Activated CD8-positive, alpha-beta T cell treated with anti-CD3 and anti-CD28 coated beads for 36 hours (primary cell): ENCODE measurements at regions of chr16 and their contacts with region 1.

Region 1: GRCh38 chr16:66872943-66873684 is 7.2 kb upstream of the PDP2 start:
- DNase-seq: peak; percentile 97
- ATAC-seq: peak; percentile 84
- H3K4me3 Mint-ChIP-seq: peak overlapping the region; percentile 83
- H3K27ac Mint-ChIP-seq: peak overlapping the region; percentile 93
- H3K4me1 Mint-ChIP-seq: peaks cover 48% of the 10 kb centered on the region
- H3K27me3 Mint-ChIP-seq: no peaks in the 10 kb centered on the region
- CTCF ChIP-seq: peak; percentile 94

Region 2: DNA sequence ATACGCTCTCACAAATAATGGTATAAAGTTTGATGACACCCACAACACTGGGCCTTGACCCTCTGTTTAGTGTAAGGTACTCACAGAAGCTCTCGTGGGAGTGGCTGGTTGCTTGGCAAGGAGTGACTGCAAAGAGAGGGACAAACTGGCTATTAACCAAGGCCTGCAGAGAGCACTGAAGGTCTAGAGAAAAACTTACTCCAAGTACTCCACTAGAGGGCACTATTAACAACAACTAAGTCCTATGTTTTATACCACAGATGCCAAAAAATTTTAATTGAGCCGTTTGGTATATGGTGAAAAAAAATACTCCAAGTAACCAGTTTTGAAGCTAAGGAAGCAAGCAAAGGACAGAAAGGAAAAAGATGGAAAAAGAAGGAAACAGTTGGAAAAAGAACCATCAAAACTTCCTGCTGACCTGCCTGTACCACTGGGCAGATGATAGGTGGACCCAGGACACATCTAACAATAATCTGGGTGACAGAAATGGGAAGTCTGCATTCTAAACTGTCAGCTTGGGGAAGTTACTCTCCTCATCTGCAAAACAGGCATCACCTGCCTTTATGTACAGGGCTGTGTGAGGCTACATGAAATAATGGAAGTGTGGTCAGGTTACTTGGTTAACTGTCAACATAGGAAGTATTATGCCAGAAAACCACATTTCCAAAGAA is 144.9 kb before region 1 on chr16:
- CTCF ChIA-PET with region 1: interaction called, 31 read pairs
- POLR2A ChIA-PET with region 1: no interaction called
- intact Hi-C with region 1: no loop called
- DNase-seq: no peak
- ATAC-seq: peak; percentile 80
- H3K4me3 Mint-ChIP-seq: no peak overlapping the region
- H3K27ac Mint-ChIP-seq: peak overlapping the region; percentile 65
- H3K4me1 Mint-ChIP-seq: peaks cover 4% of the 10 kb centered on the region
- H3K27me3 Mint-ChIP-seq: no peaks in the 10 kb centered on the region
- CTCF ChIP-seq: peak; percentile 72

Region 3: DNA sequence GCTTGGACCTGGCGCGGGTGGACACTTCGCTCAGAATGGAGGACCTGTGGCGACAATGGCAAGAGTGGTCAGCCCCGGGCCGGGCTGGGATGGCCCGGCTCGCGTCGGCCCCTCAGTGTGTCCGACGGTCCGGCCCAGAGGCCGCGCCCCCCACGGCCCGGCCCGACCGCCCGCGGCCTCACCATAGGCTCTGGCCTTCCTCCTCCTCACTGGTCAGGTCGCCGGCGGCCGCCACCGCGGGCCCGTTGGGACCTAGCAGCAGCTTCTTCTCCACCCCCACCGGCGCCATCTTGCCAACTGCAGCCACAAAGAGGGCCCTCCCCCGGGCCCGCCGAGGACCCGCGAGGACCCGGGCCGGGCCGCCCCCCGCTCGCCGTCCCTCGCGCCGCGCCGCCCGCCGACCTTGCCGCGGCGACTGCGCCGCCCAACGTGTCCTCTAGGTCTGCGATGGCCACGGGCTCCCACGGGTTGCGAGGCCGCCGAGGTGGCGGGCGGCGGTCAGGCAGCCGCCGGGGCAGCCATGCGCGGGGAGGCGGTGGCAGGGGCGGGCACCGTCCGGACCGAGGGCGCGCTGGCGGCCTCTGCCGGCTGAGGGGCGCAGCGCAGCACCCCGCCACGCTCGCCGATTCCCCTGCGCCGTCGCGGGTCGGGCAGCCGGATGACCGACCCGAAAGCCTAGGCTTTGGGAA is 121.7 kb before region 1 on chr16 and contains the start of gene DYNC1LI2:
- CTCF ChIA-PET with region 1: interaction called, 14 read pairs
- POLR2A ChIA-PET with region 1: no interaction called
- intact Hi-C with region 1: no loop called
- DNase-seq: peak; percentile 85
- ATAC-seq: peak; percentile 97
- H3K4me3 Mint-ChIP-seq: peak within 1 kb of the TSS; percentile 82
- H3K27ac Mint-ChIP-seq: peak within 1 kb of the TSS; percentile 88
- H3K4me1 Mint-ChIP-seq: peaks cover 42% of the 10 kb centered on the region
- H3K27me3 Mint-ChIP-seq: peaks cover 5% of the 10 kb centered on the region
- CTCF ChIP-seq: peak; percentile 88
- total RNA-seq, gene DYNC1LI2: 35.0 to 39.5 TPM

Region 4: DNA sequence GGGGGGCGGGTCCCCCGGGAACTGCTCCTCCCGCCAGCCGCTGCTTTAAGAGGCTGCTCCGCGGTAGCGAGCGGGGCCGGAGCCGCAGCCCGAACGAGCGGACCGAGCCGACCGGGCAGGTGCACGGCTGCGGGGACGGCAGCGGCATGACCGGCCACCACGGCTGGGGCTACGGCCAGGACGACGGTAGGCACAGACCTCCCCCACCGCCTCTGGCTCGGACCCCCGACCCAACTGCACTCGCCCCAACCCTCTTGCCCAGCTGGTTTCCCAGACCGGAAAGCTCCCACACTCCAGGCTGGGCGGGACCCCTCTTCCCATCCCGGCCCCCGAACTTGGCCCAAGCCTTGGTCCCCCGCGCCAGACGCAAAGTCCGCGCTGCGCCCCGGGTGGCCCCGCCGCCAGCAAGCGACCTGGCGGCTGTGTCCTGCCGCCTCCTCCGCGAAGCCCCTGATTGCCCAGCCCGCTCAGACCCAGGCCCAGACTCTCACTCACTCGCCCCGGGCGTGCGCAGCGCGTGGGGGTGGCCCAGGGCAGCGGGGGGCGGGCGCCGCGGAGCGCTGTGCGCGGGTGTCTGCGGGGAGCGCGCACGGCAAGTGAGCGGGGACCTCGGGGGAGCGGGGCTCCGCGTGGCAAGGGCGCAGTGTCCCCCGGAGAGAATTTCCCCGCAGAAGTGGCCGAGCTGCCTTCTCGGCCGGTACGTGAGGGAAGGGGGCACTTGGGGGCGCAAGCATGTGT is 28.6 kb before region 1 on chr16 and contains the start of gene CA7:
- CTCF ChIA-PET with region 1: interaction called, 41 read pairs
- POLR2A ChIA-PET with region 1: no interaction called
- intact Hi-C with region 1: no loop called
- DNase-seq: no peak
- ATAC-seq: peak; percentile 49
- H3K4me3 Mint-ChIP-seq: peak within 1 kb of the TSS; percentile 43
- H3K27ac Mint-ChIP-seq: no peak within 1 kb of the TSS
- H3K4me1 Mint-ChIP-seq: peaks cover 11% of the 10 kb centered on the region
- H3K27me3 Mint-ChIP-seq: peaks cover 40% of the 10 kb centered on the region
- CTCF ChIP-seq: no peak
- total RNA-seq, gene CA7: 0.27 TPM in 1 of 2 experiments, not detected in the other

Region 5: DNA sequence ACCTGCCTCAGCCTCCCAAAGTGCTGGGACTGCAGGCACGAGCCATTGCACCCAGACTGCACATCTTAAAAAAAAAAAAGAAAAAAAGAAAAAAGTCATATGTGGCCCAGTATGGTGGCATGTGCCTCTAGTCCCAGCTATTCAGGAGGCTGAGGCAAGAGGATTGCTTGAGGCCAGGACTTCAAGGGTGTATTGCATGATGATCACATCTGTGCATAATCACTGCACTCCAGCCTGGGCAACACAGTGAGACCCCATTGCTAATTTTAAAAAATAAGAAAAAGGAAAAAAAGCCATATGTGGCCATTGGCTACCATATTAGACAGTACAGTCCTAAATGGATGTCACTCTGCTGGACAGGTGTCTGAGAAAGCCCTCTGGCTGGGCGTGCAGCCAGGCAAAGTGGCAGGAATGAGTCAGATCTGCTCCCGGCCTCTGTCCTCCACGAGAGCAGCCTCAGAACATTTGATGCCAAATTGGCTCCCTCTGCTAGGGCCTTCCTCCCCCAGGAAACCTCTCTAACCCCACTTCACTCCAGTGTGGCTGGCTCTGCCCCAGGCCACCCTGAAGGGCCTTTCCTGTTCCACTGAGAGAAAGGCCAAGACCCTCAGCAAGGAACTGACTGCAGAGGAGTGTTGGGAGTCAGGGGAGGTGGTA is 14.2 kb before region 1 on chr16:
- CTCF ChIA-PET with region 1: interaction called, 40 read pairs
- POLR2A ChIA-PET with region 1: no interaction called
- intact Hi-C with region 1: no loop called
- DNase-seq: no peak
- ATAC-seq: no peak
- H3K4me3 Mint-ChIP-seq: no peak overlapping the region
- H3K27ac Mint-ChIP-seq: no peak overlapping the region
- H3K4me1 Mint-ChIP-seq: no peaks in the 10 kb centered on the region
- H3K27me3 Mint-ChIP-seq: no peaks in the 10 kb centered on the region
- CTCF ChIP-seq: no peak

Region 6: GRCh38 chr16:66905633-66906539 is 32.8 kb after region 1 on chr16:
- CTCF ChIA-PET with region 1: no interaction called
- POLR2A ChIA-PET with region 1: no interaction called
- intact Hi-C with region 1: no loop called
- DNase-seq: peak; percentile 74
- ATAC-seq: peak; percentile 75
- H3K4me3 Mint-ChIP-seq: no peak overlapping the region
- H3K27ac Mint-ChIP-seq: no peak overlapping the region
- H3K4me1 Mint-ChIP-seq: peaks cover 8% of the 10 kb centered on the region
- H3K27me3 Mint-ChIP-seq: no peaks in the 10 kb centered on the region
- CTCF ChIP-seq: no peak

Region 7: GRCh38 chr16:66924527-66925321 is 51.6 kb after region 1 on chr16:
- CTCF ChIA-PET with region 1: interaction called, 14 read pairs
- POLR2A ChIA-PET with region 1: no interaction called
- intact Hi-C with region 1: no loop called
- DNase-seq: peak; percentile 53
- ATAC-seq: peak; percentile 75
- H3K4me3 Mint-ChIP-seq: peak overlapping the region; percentile 44
- H3K27ac Mint-ChIP-seq: no peak overlapping the region
- H3K4me1 Mint-ChIP-seq: peaks cover 12% of the 10 kb centered on the region
- H3K27me3 Mint-ChIP-seq: peaks cover 35% of the 10 kb centered on the region
- CTCF ChIP-seq: peak; percentile 63

Region 8: GRCh38 chr16:67040906-67041305 is 167.8 kb after region 1 on chr16:
- CTCF ChIA-PET with region 1: no interaction called
- POLR2A ChIA-PET with region 1: no interaction called
- intact Hi-C with region 1: no loop called
- DNase-seq: no peak
- ATAC-seq: no peak
- H3K4me3 Mint-ChIP-seq: no peak overlapping the region
- H3K27ac Mint-ChIP-seq: no peak overlapping the region
- H3K4me1 Mint-ChIP-seq: peaks cover 20% of the 10 kb centered on the region
- H3K27me3 Mint-ChIP-seq: no peaks in the 10 kb centered on the region
- CTCF ChIP-seq: no peak